Activated CD8-positive, alpha-beta T cell treated with anti-CD3 and anti-CD28 coated beads, Interleukin-2, amount 10 ng/mL, durations not matched to agents 7 days and 5 days (primary cell): ENCODE measurements at regions of chr10 and their contacts with region 1.

Region 1: GRCh38 chr10:17643755-17644484 is at the start of gene STAM:
- DNase-seq: peak; percentile 95
- ATAC-seq: peak; percentile 86
- H3K4me3 Mint-ChIP-seq: peak within 1 kb of the TSS; percentile 95
- H3K27ac Mint-ChIP-seq: peak within 1 kb of the TSS; percentile 100
- H3K4me1 Mint-ChIP-seq: peaks cover 54% of the 10 kb centered on the region
- H3K27me3 Mint-ChIP-seq: no peaks in the 10 kb centered on the region
- total RNA-seq, gene STAM: 20.8 to 21.9 TPM

Region 2: GRCh38 chr10:17497446-17498030 is 146.4 kb before region 1 on chr10:
- CTCF ChIA-PET with region 1: no interaction called
- POLR2A ChIA-PET with region 1: no interaction called
- DNase-seq: no peak
- ATAC-seq: no peak
- H3K4me3 Mint-ChIP-seq: no peak overlapping the region
- H3K27ac Mint-ChIP-seq: no peak overlapping the region
- H3K4me1 Mint-ChIP-seq: no peaks in the 10 kb centered on the region
- H3K27me3 Mint-ChIP-seq: peaks cover 8% of the 10 kb centered on the region

Region 3: GRCh38 chr10:17516376-17516775 is 127.5 kb before region 1 on chr10:
- CTCF ChIA-PET with region 1: no interaction called
- POLR2A ChIA-PET with region 1: no interaction called
- DNase-seq: no peak
- ATAC-seq: no peak
- H3K4me3 Mint-ChIP-seq: no peak overlapping the region
- H3K27ac Mint-ChIP-seq: no peak overlapping the region
- H3K4me1 Mint-ChIP-seq: peaks cover 4% of the 10 kb centered on the region
- H3K27me3 Mint-ChIP-seq: peaks cover 3% of the 10 kb centered on the region

Region 4: GRCh38 chr10:17617031-17617911 is 26.6 kb before region 1 on chr10 and contains the start of gene HACD1:
- CTCF ChIA-PET with region 1: interaction called, 10 read pairs
- POLR2A ChIA-PET with region 1: interaction called, 3 read pairs
- DNase-seq: peak; percentile 66
- ATAC-seq: peak; percentile 83
- H3K4me3 Mint-ChIP-seq: peak within 1 kb of the TSS; percentile 81
- H3K27ac Mint-ChIP-seq: no peak within 1 kb of the TSS
- H3K4me1 Mint-ChIP-seq: peaks cover 5% of the 10 kb centered on the region
- H3K27me3 Mint-ChIP-seq: peaks cover 20% of the 10 kb centered on the region
- total RNA-seq, gene HACD1: 0.40 to 1.1 TPM

Region 5: GRCh38 chr10:17673456-17674061 is 29.6 kb after region 1 on chr10:
- CTCF ChIA-PET with region 1: interaction called, 4 read pairs
- POLR2A ChIA-PET with region 1: interaction called, 27 read pairs
- DNase-seq: no peak
- ATAC-seq: no peak
- H3K4me3 Mint-ChIP-seq: no peak overlapping the region
- H3K27ac Mint-ChIP-seq: peak overlapping the region; percentile 12
- H3K4me1 Mint-ChIP-seq: peaks cover 38% of the 10 kb centered on the region
- H3K27me3 Mint-ChIP-seq: no peaks in the 10 kb centered on the region

Region 6: DNA sequence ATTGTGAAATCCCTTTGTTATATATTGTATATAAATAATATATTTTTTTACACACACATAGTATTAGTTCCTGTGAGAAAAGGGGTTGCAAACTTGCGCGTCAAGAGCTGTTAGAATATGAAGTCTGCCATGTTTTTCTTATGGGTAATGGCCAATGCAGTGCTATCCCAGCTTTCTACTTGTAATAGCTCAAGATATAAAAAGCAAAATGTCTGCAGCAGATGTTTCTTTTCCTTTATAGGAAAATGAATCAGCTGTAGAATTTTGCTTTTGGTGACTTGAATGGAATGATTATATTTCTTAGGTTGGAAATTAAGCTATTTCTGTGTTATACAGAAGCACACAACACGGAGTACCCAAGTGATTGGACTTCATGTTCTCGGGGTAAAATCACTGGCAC is 54.8 kb after region 1 on chr10:
- CTCF ChIA-PET with region 1: no interaction called
- POLR2A ChIA-PET with region 1: interaction called, 15 read pairs
- DNase-seq: no peak
- ATAC-seq: no peak
- H3K4me3 Mint-ChIP-seq: no peak overlapping the region
- H3K27ac Mint-ChIP-seq: no peak overlapping the region
- H3K4me1 Mint-ChIP-seq: no peaks in the 10 kb centered on the region
- H3K27me3 Mint-ChIP-seq: no peaks in the 10 kb centered on the region

Region 7: GRCh38 chr10:17725703-17726102 is 81.8 kb after region 1 on chr10:
- CTCF ChIA-PET with region 1: no interaction called
- POLR2A ChIA-PET with region 1: no interaction called
- DNase-seq: no peak
- ATAC-seq: no peak
- H3K4me3 Mint-ChIP-seq: no peak overlapping the region
- H3K27ac Mint-ChIP-seq: no peak overlapping the region
- H3K4me1 Mint-ChIP-seq: no peaks in the 10 kb centered on the region
- H3K27me3 Mint-ChIP-seq: no peaks in the 10 kb centered on the region

Region 8: DNA sequence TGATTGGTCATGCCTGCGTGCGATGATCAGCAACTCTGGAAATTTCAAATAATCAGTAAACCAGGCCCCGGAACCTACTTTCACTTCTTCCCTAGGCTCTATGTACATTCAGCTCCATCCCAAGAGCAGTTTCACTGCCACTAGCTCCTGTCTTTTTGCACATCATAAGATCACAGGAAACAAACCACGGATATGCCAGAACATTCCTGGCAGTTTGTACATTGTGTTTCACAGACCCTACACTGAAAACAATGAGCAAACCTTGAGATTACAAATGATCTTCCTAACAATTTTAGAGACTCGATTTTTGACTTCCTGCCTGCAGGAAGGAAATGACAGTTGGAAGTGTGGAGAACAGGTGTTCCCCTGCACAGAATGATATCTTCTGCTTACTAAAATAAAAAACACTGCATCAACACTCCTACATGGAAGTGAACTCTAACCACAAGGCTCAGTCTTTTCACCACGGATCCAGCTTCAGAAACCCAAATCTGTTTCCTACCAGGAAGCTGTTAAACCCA is 100.5 kb after region 1 on chr10:
- CTCF ChIA-PET with region 1: interaction called, 10 read pairs
- POLR2A ChIA-PET with region 1: no interaction called
- DNase-seq: no peak
- ATAC-seq: no peak
- H3K4me3 Mint-ChIP-seq: no peak overlapping the region
- H3K27ac Mint-ChIP-seq: peak overlapping the region; percentile 2
- H3K4me1 Mint-ChIP-seq: peaks cover 14% of the 10 kb centered on the region
- H3K27me3 Mint-ChIP-seq: no peaks in the 10 kb centered on the region

Region 9: DNA sequence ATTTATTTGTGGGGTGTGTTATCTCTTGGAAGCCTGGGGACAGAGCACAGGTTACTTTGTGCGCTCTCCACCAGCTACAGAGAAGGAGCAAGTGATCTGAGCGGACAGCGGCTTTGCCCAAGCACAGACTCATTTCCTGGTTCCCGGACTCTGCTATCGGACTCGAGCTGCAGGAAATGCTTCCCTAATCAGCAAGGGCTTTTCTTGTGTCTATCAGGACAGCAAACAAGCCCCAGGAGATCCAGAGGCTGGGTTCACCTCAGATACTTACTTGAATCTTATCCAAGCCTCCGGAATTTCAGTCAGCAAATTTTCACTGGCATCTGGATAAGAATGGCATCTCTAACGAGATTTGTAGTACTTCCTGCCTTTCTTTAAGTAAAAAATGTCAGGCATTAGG is 193.0 kb after region 1 on chr10:
- CTCF ChIA-PET with region 1: no interaction called
- POLR2A ChIA-PET with region 1: no interaction called
- DNase-seq: no peak
- ATAC-seq: no peak
- H3K4me3 Mint-ChIP-seq: no peak overlapping the region
- H3K27ac Mint-ChIP-seq: no peak overlapping the region
- H3K4me1 Mint-ChIP-seq: no peaks in the 10 kb centered on the region
- H3K27me3 Mint-ChIP-seq: peaks cover 2% of the 10 kb centered on the region